ENCODE measurements at regions of chr2 and their contacts with region 1.

Region 1: DNA sequence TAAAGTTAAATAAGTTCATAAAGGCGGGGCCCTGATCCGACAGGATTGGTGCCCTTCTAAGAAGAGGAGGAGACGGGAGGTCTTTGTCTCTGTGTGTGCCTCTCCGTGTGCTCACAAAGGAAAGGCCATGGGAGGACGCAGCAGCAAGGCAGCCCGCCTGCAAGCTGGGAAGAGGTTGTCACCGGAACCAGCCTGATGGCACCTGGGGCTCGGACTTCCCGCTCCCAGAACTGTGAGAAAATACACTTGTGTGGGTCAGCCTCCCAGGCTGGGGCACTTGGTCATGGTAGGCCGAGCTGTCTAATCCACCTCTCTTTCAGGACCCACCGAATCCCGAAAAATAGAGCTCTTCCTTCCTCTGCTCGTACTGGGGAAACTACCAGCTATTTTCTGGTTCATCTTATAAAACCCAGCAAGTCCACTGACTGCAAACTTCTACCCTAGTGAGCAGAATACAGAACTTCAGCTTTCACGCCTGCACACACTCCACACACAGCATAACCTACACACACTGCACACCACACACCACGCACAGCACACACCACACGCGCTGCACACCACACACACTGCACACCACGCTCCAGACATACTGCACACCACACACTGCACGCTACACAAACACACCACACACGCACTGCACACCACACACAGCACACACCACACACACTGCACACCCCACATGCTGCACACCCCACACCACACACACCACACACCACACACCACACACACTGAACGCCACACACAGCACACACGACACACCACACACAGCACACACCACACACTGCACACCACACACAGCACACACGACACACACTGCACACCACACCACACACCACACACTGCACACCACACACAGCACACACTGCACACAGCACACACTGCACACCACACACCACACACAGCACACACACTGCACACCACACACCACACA is 58.1 kb downstream of the ASB1 start:
- DNase-seq: no peak
- ATAC-seq: no peak
- H3K4me3 Mint-ChIP-seq: no peak overlapping the region
- H3K27ac Mint-ChIP-seq: no peak overlapping the region
- H3K4me1 Mint-ChIP-seq: peaks cover 6% of the 10 kb centered on the region
- H3K27me3 Mint-ChIP-seq: no peaks in the 10 kb centered on the region
- CTCF ChIP-seq: no peak

Region 2: GRCh38 chr2:237633061-237633561 is 851.7 kb before region 1 on chr2:
- CTCF ChIA-PET with region 1: no interaction called
- POLR2A ChIA-PET with region 1: no interaction called
- DNase-seq: no peak
- ATAC-seq: no peak
- H3K4me3 Mint-ChIP-seq: no peak overlapping the region
- H3K27ac Mint-ChIP-seq: no peak overlapping the region; the same call in 1 of the 2 replicates
- H3K4me1 Mint-ChIP-seq: peaks cover 26% of the 10 kb centered on the region
- H3K27me3 Mint-ChIP-seq: peaks cover 11% of the 10 kb centered on the region
- CTCF ChIP-seq: no peak

Region 3: DNA sequence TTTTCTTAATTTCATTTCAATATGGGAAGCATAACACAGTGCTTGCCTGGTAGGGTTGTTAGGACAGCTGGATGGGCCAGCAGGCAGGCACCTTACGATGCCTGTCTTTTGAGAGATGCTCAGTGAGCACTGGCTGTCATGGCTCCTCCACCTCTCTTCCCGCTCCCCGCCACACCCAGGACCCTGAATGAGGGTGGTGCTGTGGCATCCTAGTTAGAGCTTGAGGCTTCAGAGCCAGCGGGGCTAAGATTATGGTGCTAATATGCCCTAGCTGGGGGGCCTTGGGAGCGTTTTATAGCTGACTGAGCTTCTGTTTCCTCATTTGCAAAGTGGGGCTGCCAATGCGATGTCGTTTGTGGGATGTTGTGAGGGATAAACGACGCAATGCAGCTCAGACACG is 20.4 kb before region 1 on chr2:
- CTCF ChIA-PET with region 1: no interaction called
- POLR2A ChIA-PET with region 1: interaction called, 12 read pairs
- DNase-seq: no peak
- ATAC-seq: no peak
- H3K4me3 Mint-ChIP-seq: no peak overlapping the region
- H3K27ac Mint-ChIP-seq: no peak overlapping the region
- H3K4me1 Mint-ChIP-seq: no peaks in the 10 kb centered on the region
- H3K27me3 Mint-ChIP-seq: no peaks in the 10 kb centered on the region; the same call in 1 of the 2 replicates
- CTCF ChIP-seq: no peak

Region 4: GRCh38 chr2:238502956-238503791 is 18.4 kb after region 1 on chr2:
- CTCF ChIA-PET with region 1: no interaction called
- POLR2A ChIA-PET with region 1: no interaction called
- DNase-seq: no peak
- ATAC-seq: no peak; the same call in 1 of the 2 replicates
- H3K4me3 Mint-ChIP-seq: no peak overlapping the region
- H3K27ac Mint-ChIP-seq: no peak overlapping the region
- H3K4me1 Mint-ChIP-seq: no peaks in the 10 kb centered on the region
- H3K27me3 Mint-ChIP-seq: no peaks in the 10 kb centered on the region
- CTCF ChIP-seq: no peak

Region 5: DNA sequence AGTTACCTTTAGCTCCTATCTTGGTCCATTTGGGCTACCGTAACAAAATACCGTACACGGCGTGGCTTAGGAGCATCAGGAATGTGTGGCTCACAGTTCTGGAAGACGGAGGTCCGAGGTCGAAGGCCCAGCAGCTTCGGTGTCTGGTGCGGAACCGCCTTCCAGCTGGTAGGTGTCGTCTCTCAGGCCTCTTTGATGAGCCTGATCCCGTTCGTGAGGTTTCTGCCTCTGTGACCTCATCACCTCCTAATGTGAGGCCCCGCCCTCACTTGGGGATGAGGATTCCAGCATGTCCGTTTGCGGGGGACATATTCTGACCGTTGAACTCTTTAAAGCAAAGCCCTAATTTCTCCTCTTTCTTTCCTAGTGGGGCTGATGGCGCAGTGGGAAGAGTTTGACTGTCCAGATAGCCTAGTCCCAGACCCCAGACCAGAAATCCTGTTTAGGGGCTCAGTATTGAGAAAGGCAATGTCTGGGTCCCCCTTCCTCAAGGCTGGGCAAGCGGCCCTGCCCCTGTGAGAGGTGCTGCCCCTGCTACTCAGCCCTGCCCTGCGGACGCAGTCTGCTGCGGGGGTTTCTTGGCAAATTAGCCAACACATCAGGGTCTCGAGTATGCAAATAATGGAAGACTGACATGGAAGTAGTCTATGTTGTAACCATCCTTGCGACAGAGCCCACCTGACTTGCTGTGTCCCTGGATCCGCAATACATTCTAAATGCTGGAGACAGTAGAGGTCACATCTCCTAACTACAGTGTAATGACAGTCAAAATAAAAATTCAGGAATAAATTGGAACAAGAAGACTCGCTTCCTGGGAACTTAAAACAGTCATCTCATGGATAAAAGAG is 69.9 kb after region 1 on chr2:
- CTCF ChIA-PET with region 1: no interaction called
- POLR2A ChIA-PET with region 1: no interaction called
- DNase-seq: peak; percentile 50
- ATAC-seq: peak; percentile 80
- H3K4me3 Mint-ChIP-seq: peak overlapping the region; percentile 55
- H3K27ac Mint-ChIP-seq: no peak overlapping the region
- H3K4me1 Mint-ChIP-seq: peaks cover 7% of the 10 kb centered on the region
- H3K27me3 Mint-ChIP-seq: peaks cover 5% of the 10 kb centered on the region
- CTCF ChIP-seq: no peak

Measured in WTC11 (cell line).